Transverse colon (tissue), 4 donors: ENCODE measurements at regions of chr1 and their contacts with region 1.

Region 1: DNA sequence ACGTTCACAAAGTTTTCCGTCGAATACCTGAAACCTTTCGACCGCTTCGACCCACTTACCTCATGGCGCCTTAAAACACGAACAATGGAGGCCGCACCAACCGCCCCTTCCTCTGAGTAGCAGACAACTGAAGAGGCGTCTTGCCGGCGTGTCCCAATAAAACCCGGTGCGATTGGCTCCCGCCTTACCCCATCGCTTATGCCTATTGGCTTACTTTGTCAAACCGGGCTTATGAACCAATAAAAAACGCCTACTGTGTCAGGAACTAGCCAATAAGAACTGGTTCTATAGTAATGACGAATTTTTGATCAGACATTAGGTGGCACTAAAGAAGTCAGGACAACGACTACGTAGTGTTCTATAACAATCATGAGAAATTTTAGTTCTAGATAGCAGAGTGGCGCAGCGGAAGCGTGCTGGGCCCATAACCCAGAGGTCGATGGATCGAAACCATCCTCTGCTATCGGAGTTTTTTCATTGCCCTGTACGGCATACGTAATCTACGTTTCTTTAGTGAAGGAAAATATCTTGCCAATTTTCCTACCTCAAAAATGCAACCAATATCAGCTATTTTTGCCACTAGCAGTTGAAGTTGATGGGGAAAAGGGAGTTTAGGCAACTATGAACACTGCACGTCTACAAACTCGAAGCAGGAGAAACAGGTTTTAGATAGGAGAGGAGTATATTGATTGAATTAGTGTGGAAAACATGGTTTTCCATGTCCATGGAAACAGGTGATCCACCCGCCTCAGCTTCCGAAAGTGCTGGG is at the start of gene ILF2:
- DNase-seq: peak; percentile 98
- H3K4me3 ChIP-seq: peak within 1 kb of the TSS; percentile 43 to 80 (median 71)
- H3K27ac ChIP-seq: peak within 1 kb of the TSS; percentile 89 to 95 (median 92)
- H3K4me1 ChIP-seq: peaks cover 9 to 33% (median 17%) of the 10 kb centered on the region in 4 donors
- H3K27me3 ChIP-seq: no peaks in the 10 kb centered on the region
- CTCF ChIP-seq: peak in 1 of 5 experiments; percentile 23
- EP300 ChIP-seq: no peak
- POLR2A ChIP-seq: peak; percentile 92
- total RNA-seq, gene ILF2: 16.5 to 102 (median 66.5) TPM

Region 2: GRCh38 chr1:153749408-153750005 is 78.5 kb after region 1 on chr1:
- in situ Hi-C with region 1: loop called in 1 of 4 experiments (anchors 10 kb)
- intact Hi-C with region 1: no loop called
- DNase-seq: peak; percentile 89
- H3K4me3 ChIP-seq: no peak overlapping the region
- H3K27ac ChIP-seq: peak overlapping the region in 3 of 4 donors; percentile 15 to 50 (median 36)
- H3K4me1 ChIP-seq: peaks cover 9 to 34% (median 15%) of the 10 kb centered on the region in 4 donors
- H3K27me3 ChIP-seq: no peaks in the 10 kb centered on the region
- CTCF ChIP-seq: peak; percentile 87 to 92 (median 90)
- EP300 ChIP-seq: no peak
- POLR2A ChIP-seq: no peak

Region 3: DNA sequence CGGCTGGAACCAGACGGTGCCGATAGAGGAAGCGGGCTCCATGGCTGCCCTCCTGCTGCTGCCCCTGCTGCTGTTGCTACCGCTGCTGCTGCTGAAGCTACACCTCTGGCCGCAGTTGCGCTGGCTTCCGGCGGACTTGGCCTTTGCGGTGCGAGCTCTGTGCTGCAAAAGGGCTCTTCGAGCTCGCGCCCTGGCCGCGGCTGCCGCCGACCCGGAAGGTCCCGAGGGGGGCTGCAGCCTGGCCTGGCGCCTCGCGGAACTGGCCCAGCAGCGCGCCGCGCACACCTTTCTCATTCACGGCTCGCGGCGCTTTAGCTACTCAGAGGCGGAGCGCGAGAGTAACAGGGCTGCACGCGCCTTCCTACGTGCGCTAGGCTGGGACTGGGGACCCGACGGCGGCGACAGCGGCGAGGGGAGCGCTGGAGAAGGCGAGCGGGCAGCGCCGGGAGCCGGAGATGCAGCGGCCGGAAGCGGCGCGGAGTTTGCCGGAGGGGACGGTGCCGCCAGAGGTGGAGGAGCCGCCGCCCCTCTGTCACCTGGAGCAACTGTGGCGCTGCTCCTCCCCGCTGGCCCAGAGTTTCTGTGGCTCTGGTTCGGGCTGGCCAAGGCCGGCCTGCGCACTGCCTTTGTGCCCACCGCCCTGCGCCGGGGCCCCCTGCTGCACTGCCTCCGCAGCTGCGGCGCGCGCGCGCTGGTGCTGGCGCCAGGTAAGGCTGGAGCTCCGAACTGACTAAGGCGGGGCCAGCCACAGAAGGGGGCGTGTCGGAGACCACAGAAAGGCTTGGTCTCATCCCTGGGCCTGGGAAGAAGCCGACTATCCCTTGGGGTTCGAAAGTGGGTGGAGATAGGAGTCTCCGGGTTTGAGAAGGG is 104.7 kb after region 1 on chr1:
- in situ Hi-C with region 1: loop called in 1 of 4 experiments (anchors 10 kb)
- intact Hi-C with region 1: no loop called
- DNase-seq: peak; percentile 81
- H3K4me3 ChIP-seq: peak overlapping the region; percentile 51 to 92 (median 86)
- H3K27ac ChIP-seq: peak overlapping the region; percentile 86 to 97 (median 92)
- H3K4me1 ChIP-seq: peaks cover 12 to 32% (median 22%) of the 10 kb centered on the region in 4 donors
- H3K27me3 ChIP-seq: no peaks in the 10 kb centered on the region
- CTCF ChIP-seq: peak in 2 of 5 experiments; percentile 22 to 26
- EP300 ChIP-seq: no peak
- POLR2A ChIP-seq: peak; percentile 43

Region 4: GRCh38 chr1:153967082-153968000 is 296.3 kb after region 1 on chr1 and contains the start of gene CREB3L4:
- in situ Hi-C with region 1: loop called in 1 of 4 experiments (anchors 25 kb)
- intact Hi-C with region 1: no loop called
- DNase-seq: peak; percentile 92
- H3K4me3 ChIP-seq: peak within 1 kb of the TSS; percentile 53 to 58 (median 56)
- H3K27ac ChIP-seq: peak within 1 kb of the TSS; percentile 88 to 96 (median 96)
- H3K4me1 ChIP-seq: peaks cover 12 to 42% (median 33%) of the 10 kb centered on the region in 4 donors
- H3K27me3 ChIP-seq: no peaks in the 10 kb centered on the region
- CTCF ChIP-seq: peak; percentile 15 to 29 (median 24)
- EP300 ChIP-seq: no peak
- POLR2A ChIP-seq: peak; percentile 94
- total RNA-seq, gene CREB3L4: 2.2 to 18.7 (median 11.6) TPM